ENCODE measurements at regions of chr10 and their contacts with region 1.

Region 1: GRCh38 chr10:70656489-70656888 is 15.8 kb upstream of the ADAMTS14 start:
- DNase-seq: peak; percentile 42 to 78 (median 62)
- ATAC-seq: peak; percentile 38 to 86 (median 77)
- H3K4me3 ChIP-seq: no peak overlapping the region
- H3K27ac ChIP-seq: peak overlapping the region in 2 of 12 donors; percentile 34 to 56
- H3K4me1 ChIP-seq: peaks cover 0 to 23% (median 15%) of the 10 kb centered on the region in 12 donors
- H3K27me3 ChIP-seq: no peaks in the 10 kb centered on the region
- CTCF ChIP-seq: no peak
- POLR2A ChIP-seq: no peak

Region 2: DNA sequence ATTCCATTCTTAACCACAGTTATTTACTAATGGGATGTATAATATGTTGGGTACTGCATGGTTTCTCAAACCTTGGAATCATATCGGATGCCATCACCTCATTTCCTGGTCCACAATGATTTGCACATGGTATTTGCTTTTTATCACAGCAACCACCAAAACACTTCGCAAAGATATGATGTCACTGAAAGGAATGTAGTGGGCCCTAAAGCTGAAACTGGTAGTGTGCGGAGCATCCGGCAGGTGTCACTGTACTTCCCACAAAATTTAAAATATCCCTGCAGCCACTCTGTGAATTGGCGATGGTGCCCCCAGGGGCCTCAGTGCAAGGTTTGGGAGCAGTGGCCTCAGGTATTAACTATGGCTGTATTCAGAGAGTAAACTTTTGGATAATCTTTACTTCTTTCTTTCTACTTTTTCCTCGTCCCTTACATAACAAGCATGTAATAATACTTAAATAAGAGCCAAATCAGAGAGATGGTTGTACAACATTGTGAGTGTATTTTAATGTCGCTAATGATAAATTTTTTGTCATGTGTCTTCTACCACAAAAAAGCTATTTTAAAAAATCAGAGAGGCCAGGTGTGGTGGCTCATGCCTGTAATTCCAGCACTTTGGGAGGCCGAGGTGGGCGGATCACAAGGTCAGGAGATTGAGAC is 960.3 kb before region 1 on chr10:
- intact Hi-C with region 1: no loop called
- DNase-seq: no peak
- ATAC-seq: peak; percentile 37 to 75 (median 56)
- H3K4me3 ChIP-seq: no peak overlapping the region
- H3K27ac ChIP-seq: no peak overlapping the region
- H3K4me1 ChIP-seq: peaks cover 0 to 3% (median 0%) of the 10 kb centered on the region in 12 donors
- H3K27me3 ChIP-seq: peaks cover 0 to 5% (median 0%) of the 10 kb centered on the region in 9 donors
- CTCF ChIP-seq: peak; percentile 36 to 77 (median 62)
- POLR2A ChIP-seq: no peak

Region 3: DNA sequence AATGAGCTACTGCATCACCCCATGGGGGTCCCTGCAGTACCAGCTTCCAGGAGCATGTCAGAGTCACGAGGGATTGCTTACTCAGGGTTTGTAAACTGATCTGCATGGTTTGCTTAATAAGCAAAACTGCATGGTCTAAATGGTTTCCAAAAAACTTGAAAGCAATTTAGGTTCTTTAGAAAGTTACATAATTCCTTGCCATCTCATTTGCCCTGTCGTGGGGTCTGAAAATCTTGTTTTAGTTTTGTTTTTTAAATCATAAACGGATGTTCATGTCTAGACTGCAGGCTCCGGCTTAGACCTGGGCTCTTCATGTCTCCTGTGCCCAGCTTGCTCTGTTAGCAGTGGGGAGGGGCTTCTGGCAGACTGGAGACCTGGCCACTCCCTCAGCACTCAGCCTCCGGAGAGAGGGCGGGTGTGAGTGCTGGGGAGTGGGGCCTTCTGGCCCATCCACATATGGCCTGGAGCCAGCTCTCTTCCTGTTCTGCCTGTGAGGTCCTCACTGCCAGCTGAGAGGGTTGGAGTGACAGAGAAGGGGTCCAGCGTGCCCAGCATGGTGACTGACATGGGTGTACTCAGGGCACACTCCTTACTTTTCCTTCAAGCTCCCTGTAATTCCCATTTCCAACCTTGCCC is 71.5 kb before region 1 on chr10:
- intact Hi-C with region 1: loop called in 1 of 10 experiments (anchors 10 kb)
- DNase-seq: peak in 1 of 5 donors; percentile 25
- ATAC-seq: peak in 1 of 4 donors; percentile 21
- H3K4me3 ChIP-seq: no peak overlapping the region
- H3K27ac ChIP-seq: peak overlapping the region in 1 of 12 donors; percentile 13
- H3K4me1 ChIP-seq: peaks cover 0 to 54% (median 35%) of the 10 kb centered on the region in 12 donors
- H3K27me3 ChIP-seq: no peaks in the 10 kb centered on the region
- CTCF ChIP-seq: no peak
- POLR2A ChIP-seq: no peak

Region 4: DNA sequence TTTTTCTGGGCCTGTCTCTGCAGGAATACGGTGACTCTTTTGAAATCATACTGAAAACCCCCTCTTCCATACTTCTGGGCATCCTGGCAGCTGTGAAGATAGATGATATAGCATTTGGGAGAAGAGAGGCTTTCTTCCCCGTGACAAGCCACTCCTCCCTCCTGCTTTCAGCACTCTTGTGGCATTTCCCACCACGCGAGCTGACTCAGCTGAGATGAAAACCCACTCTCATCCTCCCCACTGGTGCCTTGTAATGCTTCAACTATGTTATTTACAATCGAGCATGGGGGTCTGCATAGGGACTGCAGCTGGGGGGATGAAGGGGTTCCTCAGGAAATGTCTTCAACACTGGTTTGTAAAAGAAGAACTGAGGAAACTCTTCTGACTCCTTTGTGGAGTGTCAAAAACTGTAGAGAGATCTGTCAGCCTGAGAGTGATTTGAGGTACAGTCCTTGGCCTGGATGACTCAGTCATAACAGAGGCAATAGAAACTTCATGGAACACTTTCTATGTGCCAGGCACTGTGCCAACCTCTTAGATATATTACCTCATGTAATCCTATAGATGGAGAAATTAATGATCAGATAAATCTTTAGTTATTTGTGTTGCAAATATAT is 130.4 kb after region 1 on chr10:
- intact Hi-C with region 1: no loop called
- DNase-seq: no peak
- ATAC-seq: no peak
- H3K4me3 ChIP-seq: no peak overlapping the region
- H3K27ac ChIP-seq: no peak overlapping the region
- H3K4me1 ChIP-seq: peaks cover 0 to 23% (median 0%) of the 10 kb centered on the region in 12 donors
- H3K27me3 ChIP-seq: peaks cover 0 to 6% (median 0%) of the 10 kb centered on the region in 9 donors
- CTCF ChIP-seq: no peak
- POLR2A ChIP-seq: no peak

Measured in heart left ventricle (tissue), 16 donors.